Gastrocnemius medialis (tissue), 4 donors: ENCODE measurements at regions of chr13 and their contacts with region 1.

Region 1: GRCh38 chr13:75830842-75831241 is 194.7 kb downstream of the LMO7 start:
- DNase-seq: no peak
- ATAC-seq: no peak
- H3K4me3 ChIP-seq: no peak overlapping the region
- H3K27ac ChIP-seq: peak overlapping the region in 2 of 4 donors; percentile 16 to 60
- H3K4me1 ChIP-seq: peaks cover 29 to 33% of the 10 kb centered on the region in 2 donors
- H3K27me3 ChIP-seq: no peaks in the 10 kb centered on the region
- CTCF ChIP-seq: no peak
- POLR2A ChIP-seq: no peak

Region 2: DNA sequence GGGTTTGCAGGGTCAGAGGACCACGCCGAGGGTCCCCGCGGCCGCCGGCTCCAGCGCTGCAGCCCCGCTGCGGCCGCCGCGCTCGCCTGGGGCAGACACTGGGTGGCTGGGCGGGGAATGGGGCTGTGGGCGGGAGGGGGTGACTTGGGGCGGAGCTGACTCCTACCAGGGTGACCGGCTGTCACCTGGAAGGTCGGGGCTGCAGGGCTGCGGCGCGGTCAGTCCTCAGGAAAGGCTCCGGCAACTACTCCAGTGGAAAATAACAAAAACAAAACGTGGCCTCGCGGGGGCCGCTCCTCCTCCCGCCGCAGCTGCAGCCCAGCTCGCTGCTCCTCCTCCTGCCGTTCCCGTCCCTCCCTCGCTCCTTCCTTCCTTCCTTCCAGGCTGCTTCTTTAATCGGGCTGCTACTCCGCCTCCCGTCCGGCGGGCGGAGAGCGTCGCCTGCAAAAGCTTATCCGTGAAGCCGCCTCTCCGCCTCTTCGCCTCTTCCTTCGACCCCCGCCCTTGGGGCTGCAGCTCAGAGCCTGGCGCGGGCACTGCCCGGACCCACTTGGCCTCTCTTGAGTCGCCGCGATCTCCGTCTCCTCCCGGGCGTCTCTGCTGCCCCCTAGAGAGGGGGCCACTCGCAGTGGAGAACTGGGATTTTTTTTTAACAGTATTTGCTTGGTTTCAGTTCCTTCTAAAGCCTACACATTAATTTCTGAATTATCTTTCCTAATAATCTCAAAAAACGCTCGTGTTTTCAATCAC is 348.6 kb before region 1 on chr13 and contains the start of gene TBC1D4:
- in situ Hi-C with region 1: no loop called
- intact Hi-C with region 1: no loop called
- DNase-seq: peak; percentile 87 to 88
- ATAC-seq: peak; percentile 65 to 69
- H3K4me3 ChIP-seq: peak within 1 kb of the TSS; percentile 85 to 95 (median 94)
- H3K27ac ChIP-seq: peak within 1 kb of the TSS; percentile 90 to 98 (median 93)
- H3K4me1 ChIP-seq: peaks cover 22 to 47% of the 10 kb centered on the region in 2 donors
- H3K27me3 ChIP-seq: no peaks in the 10 kb centered on the region
- CTCF ChIP-seq: peak; percentile 68 to 93 (median 74)
- POLR2A ChIP-seq: peak; percentile 66 to 84
- total RNA-seq, gene TBC1D4: 49.9 to 279 (median 211) TPM

Region 3: DNA sequence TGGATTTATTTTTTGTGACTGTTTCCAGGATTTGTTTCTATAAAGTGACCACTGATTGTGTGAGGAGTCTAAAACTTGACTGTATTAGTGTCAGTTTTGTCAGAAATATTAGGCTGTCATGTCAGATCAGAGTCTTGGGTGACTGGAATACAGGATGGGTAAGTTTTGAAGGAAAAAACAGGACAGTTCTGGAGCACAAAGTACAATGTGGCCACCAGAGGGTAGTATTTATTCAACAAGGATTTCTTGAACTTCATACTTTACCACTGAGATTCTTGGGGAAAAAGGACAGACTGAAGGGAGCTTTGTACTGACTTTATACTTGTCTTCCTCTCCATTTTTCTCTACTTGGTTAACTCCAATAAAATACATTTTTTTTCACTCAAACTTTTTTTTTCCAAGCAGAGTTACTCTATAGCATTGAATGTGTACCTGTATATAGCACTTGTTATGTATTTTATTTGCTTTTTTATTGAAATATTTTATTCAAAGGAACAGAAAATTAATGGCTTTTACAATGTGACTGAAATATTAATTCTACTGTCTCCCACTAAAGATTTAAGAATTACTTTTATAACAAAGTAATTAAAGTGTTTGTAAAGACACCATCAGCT is 143.6 kb before region 1 on chr13:
- in situ Hi-C with region 1: loop called in 2 of 4 experiments (anchors 10 kb)
- intact Hi-C with region 1: no loop called
- DNase-seq: no peak
- ATAC-seq: peak in 1 of 2 donors; percentile 23
- H3K4me3 ChIP-seq: no peak overlapping the region
- H3K27ac ChIP-seq: no peak overlapping the region
- H3K4me1 ChIP-seq: no peaks in the 10 kb centered on the region
- H3K27me3 ChIP-seq: no peaks in the 10 kb centered on the region
- CTCF ChIP-seq: peak in 3 of 5 experiments; percentile 15 to 46 (median 34)
- POLR2A ChIP-seq: no peak

Region 4: DNA sequence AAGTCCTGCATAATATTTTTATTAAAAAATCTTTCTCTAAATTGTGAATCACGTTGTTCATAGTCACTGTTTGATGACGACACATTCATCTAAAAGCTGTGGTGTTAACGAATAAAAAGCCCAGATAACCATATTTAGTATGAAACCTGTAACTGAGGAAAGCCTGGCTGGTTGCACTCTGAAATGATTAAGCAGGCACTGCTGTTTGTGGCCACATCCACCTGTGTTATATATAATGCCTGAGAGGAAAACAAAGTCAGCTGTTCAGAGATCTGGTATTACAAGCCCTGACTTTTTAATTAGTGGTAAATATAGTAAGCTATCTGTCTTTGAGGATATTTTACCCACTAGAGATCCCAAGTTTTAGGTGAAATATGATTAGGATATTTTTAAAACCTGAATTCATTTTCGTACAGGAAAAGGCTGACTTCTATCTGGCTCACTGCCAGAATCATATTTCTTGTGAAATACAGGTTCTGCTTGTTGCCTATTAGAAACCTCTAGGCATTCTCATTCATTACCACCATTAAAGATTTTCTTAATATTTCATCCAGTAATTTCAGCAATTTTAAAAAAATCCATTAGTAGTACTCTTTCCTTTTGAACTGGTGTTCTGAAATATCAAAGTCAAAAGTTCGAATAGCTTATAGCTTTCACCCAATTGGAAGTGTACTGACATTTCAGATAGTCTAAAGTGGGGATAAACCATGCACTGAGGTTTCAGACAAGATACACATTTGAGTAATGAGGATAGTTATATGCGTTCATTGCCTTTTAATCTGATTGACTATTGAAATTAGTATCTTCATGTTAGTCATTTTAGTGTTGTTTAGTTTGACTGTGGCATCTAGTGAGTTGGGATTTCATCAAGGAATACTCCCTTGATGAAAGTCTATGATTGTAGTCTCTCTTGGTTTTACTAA is 115.0 kb before region 1 on chr13:
- in situ Hi-C with region 1: loop called in 1 of 4 experiments (anchors 25 kb)
- intact Hi-C with region 1: no loop called
- DNase-seq: no peak
- ATAC-seq: peak; percentile 87 to 96
- H3K4me3 ChIP-seq: no peak overlapping the region
- H3K27ac ChIP-seq: peak overlapping the region in 3 of 4 donors; percentile 2 to 43 (median 39)
- H3K4me1 ChIP-seq: peaks cover 13% of the 10 kb centered on the region in 2 donors
- H3K27me3 ChIP-seq: no peaks in the 10 kb centered on the region
- CTCF ChIP-seq: no peak
- POLR2A ChIP-seq: no peak

Region 5: GRCh38 chr13:75850916-75851315 is 20.1 kb after region 1 on chr13:
- in situ Hi-C with region 1: no loop called
- intact Hi-C with region 1: no loop called
- DNase-seq: no peak
- ATAC-seq: no peak
- H3K4me3 ChIP-seq: no peak overlapping the region
- H3K27ac ChIP-seq: no peak overlapping the region
- H3K4me1 ChIP-seq: no peaks in the 10 kb centered on the region
- H3K27me3 ChIP-seq: no peaks in the 10 kb centered on the region
- CTCF ChIP-seq: no peak
- POLR2A ChIP-seq: no peak